Cardiac septum (tissue), 1 donor: ENCODE measurements at regions of chr1 and their contacts with region 1.

Region 1: DNA sequence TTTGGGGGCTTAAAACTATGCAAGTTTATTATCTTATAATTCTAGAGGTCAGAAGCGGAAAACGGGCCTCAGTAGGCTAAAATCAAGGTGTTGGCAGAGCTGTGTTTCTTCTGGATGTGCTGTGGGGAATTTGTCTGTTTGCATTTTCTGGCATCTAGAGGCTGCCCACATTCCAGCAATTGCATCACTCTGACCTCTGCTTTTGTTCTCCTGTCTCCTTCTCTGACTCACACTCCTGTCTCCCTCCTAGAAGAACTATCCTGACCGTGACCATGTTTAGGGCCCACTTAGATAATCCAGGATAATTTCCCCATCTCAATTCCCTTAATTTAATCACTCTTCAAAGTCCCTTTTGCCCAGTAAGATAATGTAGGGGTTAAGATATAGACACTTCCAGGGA is 127.4 kb upstream of the DEPDC1 start:
- DNase-seq: no peak

Region 2: GRCh38 chr1:68331117-68331865 is 292.9 kb before region 1 on chr1:
- intact Hi-C with region 1: no loop called
- DNase-seq: no peak

Region 3: DNA sequence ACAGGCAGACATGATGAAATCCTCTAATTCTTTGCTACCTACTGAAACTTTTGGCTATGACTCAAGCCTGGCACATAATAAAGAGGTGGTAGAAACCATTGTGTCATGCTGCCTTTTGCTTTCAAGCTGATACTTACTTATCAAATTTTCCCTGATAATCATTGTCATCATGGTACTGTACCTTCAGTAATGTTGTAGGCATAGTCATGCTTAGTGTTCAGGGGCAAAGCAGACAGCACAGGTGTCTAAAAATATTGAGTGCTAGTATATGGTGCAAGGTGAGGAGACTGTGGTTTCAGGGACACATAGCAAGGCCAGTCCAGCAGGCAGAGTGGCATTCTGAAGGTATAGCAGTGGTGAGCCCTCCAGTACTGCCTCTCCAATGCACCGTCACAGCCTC is 99.6 kb after region 1 on chr1:
- intact Hi-C with region 1: loop called (anchors 5 kb)
- DNase-seq: no peak